ENCODE measurements at regions of chr5 and their contacts with region 1.

Region 1: DNA sequence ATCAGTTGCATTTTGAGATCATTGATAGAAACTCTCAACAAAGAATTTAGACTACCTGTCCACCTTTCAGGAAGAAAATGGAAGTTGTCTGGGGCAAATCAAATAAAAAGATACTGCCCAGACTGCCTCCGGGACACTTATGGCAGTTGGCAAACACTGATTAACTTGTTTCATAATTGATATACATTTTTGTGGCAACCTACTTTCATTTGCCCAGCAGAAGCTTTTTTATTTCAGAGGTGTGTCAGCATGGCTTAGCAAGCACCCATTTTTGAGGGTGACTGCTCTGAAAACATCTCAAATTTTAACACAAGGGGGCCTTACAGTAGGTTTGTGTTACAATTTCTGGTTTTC is 177.2 kb downstream of the NR2F1-AS1 start:
- DNase-seq: no peak
- H3K4me3 ChIP-seq: no peak overlapping the region
- H3K27ac ChIP-seq: no peak overlapping the region
- H3K4me1 ChIP-seq: no peaks in the 10 kb centered on the region
- H3K27me3 ChIP-seq: no peaks in the 10 kb centered on the region
- CTCF ChIP-seq: no peak
- POLR2A ChIP-seq: no peak

Region 2: GRCh38 chr5:93279296-93279963 is 124.4 kb before region 1 on chr5:
- intact Hi-C with region 1: loop called (anchors 5 kb)
- DNase-seq: no peak
- H3K4me3 ChIP-seq: no peak overlapping the region
- H3K27ac ChIP-seq: no peak overlapping the region
- H3K4me1 ChIP-seq: no peaks in the 10 kb centered on the region
- H3K27me3 ChIP-seq: no peaks in the 10 kb centered on the region
- CTCF ChIP-seq: no peak
- POLR2A ChIP-seq: no peak

Region 3: DNA sequence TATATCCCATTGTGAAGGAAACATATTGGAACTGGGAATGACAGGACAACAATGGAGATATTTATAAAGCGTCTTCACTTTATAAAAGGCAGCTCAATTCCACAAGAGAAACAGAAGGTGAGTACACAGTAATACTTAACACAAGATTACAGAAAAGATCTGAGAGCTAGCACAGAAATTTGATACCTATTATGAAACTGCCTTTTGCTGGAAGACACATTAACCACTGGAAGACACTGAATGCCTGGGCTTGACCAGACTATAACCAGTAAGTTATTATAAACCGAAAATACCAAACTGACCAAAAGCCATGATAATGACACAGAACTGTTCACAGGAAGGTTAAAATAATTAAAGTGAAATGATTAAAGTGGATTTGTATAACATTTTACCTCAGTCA is 18.2 kb before region 1 on chr5:
- intact Hi-C with region 1: no loop called
- DNase-seq: no peak
- H3K4me3 ChIP-seq: no peak overlapping the region
- H3K27ac ChIP-seq: no peak overlapping the region
- H3K4me1 ChIP-seq: no peaks in the 10 kb centered on the region
- H3K27me3 ChIP-seq: no peaks in the 10 kb centered on the region
- CTCF ChIP-seq: no peak
- POLR2A ChIP-seq: no peak